GM10248 (cell line): ENCODE measurements at regions of chr20 and their contacts with region 1.

Region 1: GRCh38 chr20:62302341-62303058 is at the start of gene ADRM1:
- DNase-seq: peak; percentile 99
- CTCF ChIP-seq: peak; percentile 87

Region 2: DNA sequence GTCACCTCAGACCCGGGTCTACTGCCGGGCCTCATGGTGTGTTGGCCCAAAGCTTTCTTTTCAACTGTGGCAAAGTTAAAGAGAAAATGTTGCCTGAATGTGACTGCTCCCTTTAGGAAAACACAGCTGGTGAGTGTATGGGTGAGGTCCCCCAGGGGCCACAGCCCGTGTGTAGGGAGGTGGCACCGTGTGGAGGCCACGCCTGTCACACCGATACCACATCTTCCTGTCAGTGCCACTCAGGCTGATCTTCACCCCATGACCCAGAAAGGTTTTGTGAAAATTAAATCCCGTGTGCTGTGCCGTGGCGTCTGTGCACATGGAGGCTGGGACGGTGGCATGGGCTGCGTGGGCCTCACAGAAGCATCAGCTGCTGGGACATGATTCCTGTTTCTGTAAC is 10.4 kb before region 1 on chr20:
- CTCF ChIA-PET with region 1: interaction called, 14 read pairs
- POLR2A ChIA-PET with region 1: no interaction called
- DNase-seq: no peak
- CTCF ChIP-seq: no peak

Region 3: GRCh38 chr20:62332422-62332821 is 29.9 kb after region 1 on chr20:
- CTCF ChIA-PET with region 1: no interaction called
- POLR2A ChIA-PET with region 1: no interaction called
- DNase-seq: no peak
- CTCF ChIP-seq: no peak